A673 (cell line): ENCODE measurements at regions of chr11 and their contacts with region 1.

Region 1: GRCh38 chr11:63813035-63813562 is at the start of gene SPINDOC:
- DNase-seq: peak; percentile 92
- H3K4me3 ChIP-seq: peak within 1 kb of the TSS; percentile 96
- H3K27ac ChIP-seq: peak within 1 kb of the TSS; percentile 84
- H3K4me1 ChIP-seq: peaks cover 23% of the 10 kb centered on the region
- H3K27me3 ChIP-seq: no peaks in the 10 kb centered on the region
- CTCF ChIP-seq: no peak
- total RNA-seq, gene SPINDOC: 91.1 and 94.5 TPM in 2 replicates

Region 2: GRCh38 chr11:63567044-63567840 is 245.9 kb before region 1 on chr11:
- CTCF ChIA-PET with region 1: no interaction called
- POLR2A ChIA-PET with region 1: no interaction called
- intact Hi-C with region 1: no loop called
- DNase-seq: peak; percentile 63
- H3K4me3 ChIP-seq: no peak overlapping the region
- H3K27ac ChIP-seq: no peak overlapping the region
- H3K4me1 ChIP-seq: peaks cover 6% of the 10 kb centered on the region
- H3K27me3 ChIP-seq: no peaks in the 10 kb centered on the region
- CTCF ChIP-seq: no peak

Region 3: GRCh38 chr11:63866211-63866610 is 53.1 kb after region 1 on chr11:
- CTCF ChIA-PET with region 1: no interaction called
- POLR2A ChIA-PET with region 1: interaction called, 18 read pairs
- intact Hi-C with region 1: no loop called
- DNase-seq: peak; percentile 84
- H3K4me3 ChIP-seq: no peak overlapping the region
- H3K27ac ChIP-seq: peak overlapping the region; percentile 45
- H3K4me1 ChIP-seq: peaks cover 43% of the 10 kb centered on the region
- H3K27me3 ChIP-seq: no peaks in the 10 kb centered on the region
- CTCF ChIP-seq: no peak

Region 4: GRCh38 chr11:63922670-63923192 is 109.6 kb after region 1 on chr11:
- CTCF ChIA-PET with region 1: interaction called, 15 read pairs
- POLR2A ChIA-PET with region 1: no interaction called
- intact Hi-C with region 1: no loop called
- DNase-seq: no peak
- H3K4me3 ChIP-seq: no peak overlapping the region
- H3K27ac ChIP-seq: no peak overlapping the region
- H3K4me1 ChIP-seq: peaks cover 17% of the 10 kb centered on the region
- H3K27me3 ChIP-seq: no peaks in the 10 kb centered on the region
- CTCF ChIP-seq: no peak